Mammary epithelial cell (primary cell): ENCODE measurements at regions of chr16 and their contacts with region 1.

Region 1: DNA sequence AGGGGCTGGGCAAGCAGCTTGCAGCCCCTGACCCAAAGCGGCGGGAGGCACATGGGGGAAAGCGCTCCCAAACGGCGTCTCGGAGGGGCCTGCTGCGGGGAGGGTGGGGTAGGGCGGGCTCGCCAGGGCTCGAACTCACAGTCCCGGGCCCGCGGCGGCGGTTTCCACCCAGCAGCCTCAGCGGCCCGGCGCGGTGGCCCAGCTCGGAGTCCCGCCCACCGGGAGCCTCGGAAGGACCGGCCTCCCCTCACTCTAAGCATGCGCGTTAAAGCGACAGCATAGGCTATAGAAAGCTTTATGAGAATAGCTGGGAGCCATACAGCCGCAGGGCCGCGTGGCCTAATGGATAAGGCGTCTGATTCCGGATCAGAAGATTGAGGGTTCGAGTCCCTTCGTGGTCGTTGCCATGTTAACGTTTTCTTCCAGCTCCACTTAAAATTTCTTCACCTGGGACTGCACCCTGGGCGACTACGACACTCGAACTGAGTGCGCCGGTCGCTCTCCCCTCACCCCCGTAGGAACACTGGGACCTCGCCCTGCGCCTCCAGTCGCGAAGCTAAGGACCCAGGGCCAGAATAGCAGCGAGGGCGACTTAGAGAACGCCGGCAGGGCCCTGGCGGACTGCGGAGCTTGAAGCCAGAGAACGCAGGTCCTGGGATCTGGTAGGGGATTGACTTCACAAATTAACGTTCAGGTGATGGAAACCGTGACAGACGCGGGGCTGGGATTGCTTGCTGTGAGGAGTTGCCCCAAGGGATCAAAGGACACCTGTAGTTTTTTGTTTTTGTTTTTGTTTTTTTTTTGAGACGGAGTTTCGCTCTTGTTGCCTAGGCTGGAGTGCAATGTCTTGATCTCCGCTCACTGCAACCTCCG is 15.8 kb downstream of the ZNF213 start:
- DNase-seq: peak; percentile 96
- H3K4me3 ChIP-seq: peak overlapping the region; percentile 62 to 70 (median 70)
- H3K27ac ChIP-seq: peak overlapping the region; percentile 70
- H3K4me1 ChIP-seq: peaks cover 14% of the 10 kb centered on the region
- H3K27me3 ChIP-seq: no peaks in the 10 kb centered on the region
- CTCF ChIP-seq: no peak

Region 2: GRCh38 chr16:3099732-3100499 is 50.7 kb before region 1 on chr16:
- CTCF ChIA-PET with region 1: no interaction called
- dilution Hi-C with region 1: loop called (anchors 5 kb)
- in situ Hi-C with region 1: no loop called
- intact Hi-C with region 1: no loop called
- DNase-seq: peak; percentile 83
- H3K4me3 ChIP-seq: peak overlapping the region in 1 of 3 experiments; percentile 19
- H3K27ac ChIP-seq: no peak overlapping the region
- H3K4me1 ChIP-seq: peaks cover 4% of the 10 kb centered on the region
- H3K27me3 ChIP-seq: no peaks in the 10 kb centered on the region
- CTCF ChIP-seq: no peak

Region 3: DNA sequence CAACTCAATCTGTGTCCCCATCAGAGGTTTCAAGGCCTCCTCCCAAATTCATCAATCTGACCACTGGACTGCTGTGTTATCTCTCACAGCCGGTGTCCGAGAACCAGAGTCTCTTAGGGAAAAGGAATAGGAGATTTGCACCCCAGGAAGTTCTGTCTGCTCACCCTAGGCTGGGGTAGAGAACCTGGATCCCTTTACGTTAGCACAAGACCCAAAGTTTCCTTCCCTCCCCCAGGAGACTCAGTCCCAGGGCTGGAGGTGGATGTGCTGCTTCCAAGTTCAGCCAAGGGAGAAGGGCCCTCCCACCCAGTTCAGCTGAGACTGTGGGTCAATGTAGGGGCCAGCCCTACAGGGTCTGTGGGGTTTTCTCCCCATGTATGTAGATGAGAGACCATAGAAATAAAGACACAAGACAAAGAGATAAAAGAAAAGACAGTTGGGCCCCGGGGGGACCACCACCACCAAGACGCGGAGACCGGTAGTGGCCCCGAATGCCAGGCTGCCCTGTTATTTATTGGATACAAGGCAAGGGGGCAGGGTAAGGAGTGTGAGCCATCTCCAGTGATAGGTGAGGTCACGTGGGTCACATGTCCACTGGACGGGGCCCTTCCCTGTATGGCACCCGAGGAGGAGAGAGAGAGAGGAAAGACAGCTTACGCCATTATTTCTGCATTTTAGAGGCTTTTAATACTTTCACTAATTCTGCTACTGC is 14.7 kb after region 1 on chr16:
- CTCF ChIA-PET with region 1: interaction called, 4 read pairs
- dilution Hi-C with region 1: no loop called
- in situ Hi-C with region 1: no loop called
- intact Hi-C with region 1: loop called (anchors 1 kb)
- DNase-seq: no peak
- H3K4me3 ChIP-seq: no peak overlapping the region
- H3K27ac ChIP-seq: no peak overlapping the region
- H3K4me1 ChIP-seq: no peaks in the 10 kb centered on the region
- H3K27me3 ChIP-seq: peaks cover under 1% of the 10 kb centered on the region
- CTCF ChIP-seq: no peak

Region 4: DNA sequence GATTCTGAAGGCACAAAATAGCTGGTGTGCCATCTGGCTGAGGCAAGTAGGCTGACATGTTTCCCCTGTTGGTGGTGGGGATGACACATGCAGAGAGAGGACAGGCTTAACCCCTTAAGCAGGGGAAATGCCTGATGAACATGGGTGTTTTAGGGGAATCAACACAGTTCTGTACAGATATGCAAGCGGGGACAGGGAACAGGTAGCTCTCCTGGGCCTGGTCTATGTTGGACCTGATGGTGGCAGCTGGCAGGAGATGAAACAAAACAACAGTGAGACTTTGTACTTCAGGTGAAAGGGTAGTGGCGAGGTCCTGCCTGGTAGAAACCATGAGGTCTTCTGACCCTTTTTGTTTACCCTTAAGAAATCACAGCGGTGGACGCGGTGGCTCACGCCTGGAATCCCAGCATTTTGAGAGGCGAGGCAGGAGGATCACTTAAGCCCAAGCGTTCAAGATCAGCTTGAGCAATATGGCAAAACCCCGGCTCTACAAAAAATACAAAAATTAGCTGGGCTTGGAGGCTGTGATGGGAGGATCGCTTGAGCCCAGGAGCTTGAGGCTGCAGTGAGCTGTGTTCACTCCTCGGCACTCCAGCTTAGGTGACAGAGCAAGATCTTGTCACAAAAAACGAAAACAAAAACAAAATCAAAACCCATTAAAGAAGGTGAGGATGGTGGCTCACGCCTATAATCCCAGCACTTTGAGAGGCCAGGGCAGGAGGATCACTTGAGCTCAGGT is 47.9 kb after region 1 on chr16:
- CTCF ChIA-PET with region 1: no interaction called
- dilution Hi-C with region 1: no loop called
- in situ Hi-C with region 1: no loop called
- intact Hi-C with region 1: no loop called
- DNase-seq: no peak
- H3K4me3 ChIP-seq: no peak overlapping the region
- H3K27ac ChIP-seq: no peak overlapping the region
- H3K4me1 ChIP-seq: no peaks in the 10 kb centered on the region
- H3K27me3 ChIP-seq: peaks cover 3% of the 10 kb centered on the region
- CTCF ChIP-seq: no peak

Region 5: DNA sequence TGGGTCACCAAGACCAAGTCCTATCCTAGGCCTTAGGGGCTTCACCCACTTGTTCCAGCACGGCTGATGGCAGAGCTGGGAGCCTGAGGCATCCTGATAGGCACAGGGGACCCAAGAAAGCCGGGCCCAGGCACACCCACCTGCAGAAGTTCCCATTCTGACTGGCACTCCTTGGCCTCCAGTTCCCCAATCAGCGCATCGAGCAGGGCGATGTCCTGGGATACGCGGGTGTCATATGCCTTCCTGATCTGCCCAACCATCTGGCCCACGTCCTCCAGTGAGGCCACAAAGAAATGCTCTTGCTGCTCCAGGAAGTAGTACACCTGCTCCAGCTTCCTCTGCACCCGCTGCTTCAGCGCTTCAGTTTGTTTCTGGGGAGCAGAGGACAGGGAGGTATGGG is 96.3 kb after region 1 on chr16:
- CTCF ChIA-PET with region 1: no interaction called
- dilution Hi-C with region 1: loop called (anchors 5 kb)
- in situ Hi-C with region 1: no loop called
- intact Hi-C with region 1: no loop called
- DNase-seq: no peak
- H3K4me3 ChIP-seq: no peak overlapping the region
- H3K27ac ChIP-seq: no peak overlapping the region
- H3K4me1 ChIP-seq: no peaks in the 10 kb centered on the region
- H3K27me3 ChIP-seq: no peaks in the 10 kb centered on the region
- CTCF ChIP-seq: no peak

Region 6: DNA sequence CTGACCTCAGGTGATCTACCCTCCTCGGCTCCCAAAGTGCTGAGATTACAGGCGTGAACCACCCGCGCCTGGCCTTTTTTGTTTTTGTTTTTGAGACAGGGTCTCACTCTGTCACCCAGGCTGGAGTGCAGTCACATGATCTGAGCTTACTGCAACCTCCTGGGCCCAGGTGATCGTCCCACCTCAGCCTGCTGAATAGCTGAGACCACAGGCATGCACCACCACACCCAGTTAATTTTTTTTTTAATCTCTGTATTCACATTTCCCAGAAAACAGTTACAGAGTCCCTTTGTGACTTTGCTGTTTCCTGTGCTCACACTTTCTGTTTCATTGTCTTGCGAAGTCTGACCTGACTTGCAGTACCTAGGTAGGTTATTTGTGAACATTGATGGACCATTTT is 352.9 kb after region 1 on chr16:
- CTCF ChIA-PET with region 1: no interaction called
- dilution Hi-C with region 1: no loop called
- in situ Hi-C with region 1: no loop called
- intact Hi-C with region 1: loop called (anchors 2 kb)
- DNase-seq: peak; percentile 62
- H3K4me3 ChIP-seq: no peak overlapping the region
- H3K27ac ChIP-seq: peak overlapping the region; percentile 65
- H3K4me1 ChIP-seq: peaks cover 18% of the 10 kb centered on the region
- H3K27me3 ChIP-seq: no peaks in the 10 kb centered on the region
- CTCF ChIP-seq: no peak